ENCODE measurements at regions of chr12 and their contacts with region 1.

Region 1: DNA sequence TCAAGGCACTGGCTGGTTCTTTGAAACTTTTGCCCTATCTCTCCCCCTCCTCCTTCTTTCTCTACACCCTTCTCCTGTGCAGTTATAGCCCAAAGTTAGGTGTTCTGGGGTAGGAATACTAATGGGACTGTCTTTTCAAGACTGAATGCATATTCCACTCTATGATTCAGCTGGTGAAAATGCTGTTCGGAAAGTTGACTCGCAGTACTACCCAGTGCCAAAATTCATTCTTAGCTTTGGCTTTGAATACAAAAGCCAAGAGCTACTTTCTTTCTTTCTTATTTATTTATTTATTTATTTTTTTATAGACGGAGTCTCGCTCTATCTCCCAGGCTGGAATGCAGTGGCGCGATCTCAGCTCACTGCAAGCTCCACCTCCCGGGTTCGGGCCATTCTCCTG is 249.2 kb downstream of the ETNK1 start:
- DNase-seq: no peak
- ATAC-seq: no peak
- H3K4me3 Mint-ChIP-seq: no peak overlapping the region
- H3K27ac Mint-ChIP-seq: no peak overlapping the region
- H3K4me1 Mint-ChIP-seq: no peaks in the 10 kb centered on the region
- H3K27me3 Mint-ChIP-seq: no peaks in the 10 kb centered on the region

Region 2: GRCh38 chr12:23126794-23127193 is 252.6 kb after region 1 on chr12:
- CTCF ChIA-PET with region 1: no interaction called
- POLR2A ChIA-PET with region 1: interaction called, 10 read pairs
- intact Hi-C with region 1: no loop called
- DNase-seq: no peak
- ATAC-seq: no peak
- H3K4me3 Mint-ChIP-seq: no peak overlapping the region
- H3K27ac Mint-ChIP-seq: no peak overlapping the region
- H3K4me1 Mint-ChIP-seq: no peaks in the 10 kb centered on the region
- H3K27me3 Mint-ChIP-seq: no peaks in the 10 kb centered on the region

Measured in activated CD4-positive, alpha-beta T cell treated with anti-CD3 and anti-CD28 coated beads for 36 hours (primary cell).